ENCODE measurements at regions of chr19 and their contacts with region 1.

Region 1: GRCh38 chr19:53792721-53793433 is 31.2 kb downstream of the NLRP12 start:
- DNase-seq: peak; percentile 29
- H3K4me3 ChIP-seq: no peak overlapping the region
- CTCF ChIP-seq: peak; percentile 92

Region 2: DNA sequence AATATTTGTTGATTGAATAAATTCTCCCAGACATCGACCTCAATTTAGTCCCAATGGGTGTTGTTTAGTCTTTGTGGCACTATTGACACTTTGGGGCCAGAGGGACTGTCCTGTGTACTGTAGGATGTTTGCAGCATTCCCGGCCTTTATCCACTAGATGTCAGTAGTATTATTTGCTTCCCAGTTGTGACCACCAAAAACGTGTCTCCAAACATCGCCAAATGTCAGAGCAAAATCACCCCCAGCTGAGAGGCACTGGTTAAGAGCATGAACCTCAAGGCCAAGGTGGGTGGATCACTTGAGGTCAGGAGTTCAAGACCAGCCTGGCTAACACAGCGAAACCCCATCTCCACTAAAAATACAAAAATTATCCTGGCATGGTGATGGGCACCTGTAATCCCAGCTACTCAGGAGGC is 15.8 kb after region 1 on chr19:
- CTCF ChIA-PET with region 1: interaction called, 17 read pairs
- POLR2A ChIA-PET with region 1: no interaction called
- DNase-seq: no peak
- H3K4me3 ChIP-seq: no peak overlapping the region
- CTCF ChIP-seq: peak; percentile 45

Region 3: DNA sequence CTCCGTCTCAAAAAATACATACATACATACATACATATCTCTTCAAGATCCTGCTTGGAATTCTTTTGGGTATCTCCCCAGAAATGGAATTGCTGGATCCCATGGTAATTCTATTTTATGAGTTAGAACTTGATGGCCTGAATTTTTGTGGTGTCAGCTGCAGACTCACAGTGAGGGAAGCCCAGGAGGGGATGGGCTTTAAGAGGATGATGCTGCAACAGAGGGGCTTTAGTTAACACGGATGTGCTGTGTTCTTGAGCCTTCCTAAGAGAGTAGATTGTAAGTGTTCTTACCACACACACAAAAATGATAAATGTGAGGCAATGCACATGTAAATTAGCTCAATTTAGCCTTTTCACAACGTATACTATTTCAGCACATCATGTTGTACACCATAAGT is 230.3 kb after region 1 on chr19:
- CTCF ChIA-PET with region 1: interaction called, 66 read pairs
- POLR2A ChIA-PET with region 1: no interaction called
- DNase-seq: no peak
- H3K4me3 ChIP-seq: no peak overlapping the region
- CTCF ChIP-seq: no peak

Region 4: DNA sequence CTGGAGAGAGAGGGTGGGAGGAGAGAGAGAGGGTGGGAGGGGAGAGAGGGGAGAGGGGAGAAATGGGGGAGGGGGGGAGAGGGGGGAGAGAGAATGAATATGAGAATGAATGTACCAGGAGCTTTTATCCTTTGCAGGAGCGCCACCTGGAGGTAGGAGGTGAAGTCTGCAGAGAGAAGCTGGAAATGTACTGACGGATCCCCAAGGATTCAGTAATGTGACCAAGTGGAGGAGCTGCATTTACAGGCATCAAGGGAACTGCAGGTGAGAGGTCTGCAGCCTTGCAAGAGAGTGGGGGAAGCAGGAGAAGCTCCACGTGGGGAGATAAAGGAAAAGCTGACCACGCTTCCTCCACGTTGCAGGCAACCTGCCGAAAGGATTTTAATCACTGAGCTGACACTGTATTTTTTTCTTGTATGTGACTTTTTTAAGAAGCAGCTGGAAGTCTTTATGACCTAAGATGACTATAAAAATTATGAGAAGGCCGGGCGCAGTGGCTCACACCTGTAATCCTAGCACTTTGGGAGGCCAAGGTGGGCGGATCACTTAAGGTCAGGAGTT is 237.1 kb after region 1 on chr19:
- CTCF ChIA-PET with region 1: interaction called, 66 read pairs
- POLR2A ChIA-PET with region 1: no interaction called
- DNase-seq: no peak
- H3K4me3 ChIP-seq: no peak overlapping the region
- CTCF ChIP-seq: peak; percentile 69

Region 5: GRCh38 chr19:54035215-54036178 is 242.6 kb after region 1 on chr19:
- CTCF ChIA-PET with region 1: interaction called, 21 read pairs
- POLR2A ChIA-PET with region 1: no interaction called
- DNase-seq: peak; percentile 29
- H3K4me3 ChIP-seq: no peak overlapping the region
- CTCF ChIP-seq: no peak

Region 6: GRCh38 chr19:54077334-54077733 is 284.5 kb after region 1 on chr19:
- CTCF ChIA-PET with region 1: no interaction called
- POLR2A ChIA-PET with region 1: no interaction called
- DNase-seq: no peak
- H3K4me3 ChIP-seq: no peak overlapping the region
- CTCF ChIP-seq: no peak

Measured in AG04449 (cell line).